ENCODE measurements at regions of chr1 and their contacts with region 1.

Region 1: GRCh38 chr1:200971955-200972711 is 51.4 kb downstream of the KIF21B start:
- DNase-seq: peak; percentile 75 to 88 (median 86)
- H3K4me3 ChIP-seq: no peak overlapping the region
- H3K27ac ChIP-seq: no peak overlapping the region
- H3K4me1 ChIP-seq: no peaks in the 10 kb centered on the region
- H3K27me3 ChIP-seq: no peaks in the 10 kb centered on the region
- CTCF ChIP-seq: peak; percentile 77

Region 2: DNA sequence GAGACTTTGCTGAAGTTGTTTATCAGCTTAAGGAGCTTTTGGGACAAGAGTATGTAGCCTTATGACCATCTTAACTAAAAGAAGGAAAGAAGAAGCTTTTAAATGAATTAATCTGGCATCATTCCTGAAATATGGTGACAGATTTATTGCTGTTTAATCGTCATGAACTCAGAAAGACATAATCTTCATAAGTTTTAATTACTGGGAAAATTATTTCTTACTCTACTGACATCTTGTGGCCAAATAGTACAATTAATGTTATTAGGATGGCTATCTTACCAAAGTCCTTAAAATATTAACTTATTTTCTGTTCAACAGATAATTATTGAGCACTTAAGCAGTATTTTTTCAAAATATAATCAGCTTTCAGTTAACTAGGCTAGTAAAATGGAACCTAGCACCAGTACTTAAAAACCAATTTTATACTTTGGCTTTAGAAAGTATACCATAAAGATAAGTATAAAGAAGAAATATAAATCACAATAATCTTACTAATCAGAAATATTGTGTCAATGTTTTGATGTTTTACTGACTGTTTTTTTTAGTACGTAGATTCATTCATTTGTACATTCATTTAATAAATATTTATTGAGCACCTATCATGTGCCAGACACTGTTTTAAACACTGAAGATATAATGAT is 134.1 kb before region 1 on chr1:
- intact Hi-C with region 1: no loop called
- DNase-seq: peak in 2 of 5 donors; percentile 31 to 52
- H3K4me3 ChIP-seq: no peak overlapping the region
- H3K27ac ChIP-seq: no peak overlapping the region
- H3K4me1 ChIP-seq: no peaks in the 10 kb centered on the region
- H3K27me3 ChIP-seq: no peaks in the 10 kb centered on the region
- CTCF ChIP-seq: peak; percentile 24

Region 3: GRCh38 chr1:201042779-201043461 is 70.8 kb after region 1 on chr1:
- intact Hi-C with region 1: loop called (anchors 5 kb)
- DNase-seq: peak; percentile 64 to 86 (median 74)
- H3K4me3 ChIP-seq: no peak overlapping the region
- H3K27ac ChIP-seq: no peak overlapping the region
- H3K4me1 ChIP-seq: no peaks in the 10 kb centered on the region
- H3K27me3 ChIP-seq: no peaks in the 10 kb centered on the region
- CTCF ChIP-seq: peak; percentile 90

Region 4: GRCh38 chr1:201114236-201115131 is 142.4 kb after region 1 on chr1:
- intact Hi-C with region 1: loop called (anchors 5 kb)
- DNase-seq: peak; percentile 93 to 97 (median 96)
- H3K4me3 ChIP-seq: peak overlapping the region; percentile 41 to 58 (median 51)
- H3K27ac ChIP-seq: no peak overlapping the region
- H3K4me1 ChIP-seq: peaks cover 0 to 3% (median 0%) of the 10 kb centered on the region in 3 donors
- H3K27me3 ChIP-seq: no peaks in the 10 kb centered on the region
- CTCF ChIP-seq: peak; percentile 89